Heart left ventricle (tissue), 16 donors: ENCODE measurements at regions of chr12 and their contacts with region 1.

Region 1: DNA sequence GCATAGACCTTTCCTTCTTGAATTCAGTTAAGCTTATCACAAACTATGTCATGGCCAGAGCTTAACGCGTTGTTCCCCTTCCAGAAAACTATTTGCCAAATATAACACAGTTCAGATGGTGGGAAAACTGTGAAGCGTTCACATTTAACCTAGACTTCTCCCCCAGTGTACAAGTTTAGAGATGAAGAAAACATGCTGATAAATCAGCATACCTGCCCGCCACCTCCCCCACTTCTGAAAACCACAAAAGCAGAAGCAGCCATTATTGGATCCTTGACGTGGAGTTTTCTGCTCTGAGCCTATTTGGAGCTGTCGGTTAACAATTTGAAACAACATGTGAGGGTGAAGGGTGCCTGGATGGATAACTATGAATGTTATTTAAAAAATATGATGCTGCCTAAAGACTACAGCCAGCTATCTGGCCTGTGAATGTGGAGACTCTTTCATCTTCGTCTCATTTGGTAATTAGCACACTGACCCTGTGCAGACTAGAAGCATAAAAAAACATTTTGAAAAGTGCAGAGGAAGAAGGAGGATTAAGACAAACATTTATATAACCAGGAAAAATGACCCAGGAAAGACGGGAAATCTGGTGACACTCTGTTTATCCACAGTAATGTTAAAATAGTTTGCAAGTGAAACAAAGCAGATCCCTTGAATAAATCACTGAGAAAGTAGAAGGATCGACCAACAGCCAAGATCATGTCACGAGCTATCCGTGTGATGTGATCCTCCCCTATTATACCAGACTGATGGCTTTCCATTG is 408.2 kb downstream of the AEBP2 start:
- DNase-seq: peak in 4 of 5 donors; percentile 38 to 57 (median 44)
- ATAC-seq: peak; percentile 87 to 89 (median 89)
- H3K4me3 ChIP-seq: peak overlapping the region in 7 of 12 donors; percentile 1 to 27 (median 12)
- H3K27ac ChIP-seq: peak overlapping the region; percentile 76 to 96 (median 86)
- H3K4me1 ChIP-seq: peaks cover 0 to 22% (median 13%) of the 10 kb centered on the region in 12 donors
- H3K27me3 ChIP-seq: no peaks in the 10 kb centered on the region
- CTCF ChIP-seq: no peak
- POLR2A ChIP-seq: no peak

Region 2: GRCh38 chr12:19885092-19885812 is 37.8 kb after region 1 on chr12:
- intact Hi-C with region 1: loop called in 1 of 10 experiments (anchors 5 kb)
- DNase-seq: no peak
- ATAC-seq: peak in 3 of 4 donors; percentile 43 to 66 (median 50)
- H3K4me3 ChIP-seq: no peak overlapping the region
- H3K27ac ChIP-seq: peak overlapping the region in 8 of 12 donors; percentile 0 to 69 (median 40)
- H3K4me1 ChIP-seq: peaks cover 0 to 45% (median 15%) of the 10 kb centered on the region in 12 donors
- H3K27me3 ChIP-seq: no peaks in the 10 kb centered on the region
- CTCF ChIP-seq: no peak
- POLR2A ChIP-seq: no peak

Region 3: DNA sequence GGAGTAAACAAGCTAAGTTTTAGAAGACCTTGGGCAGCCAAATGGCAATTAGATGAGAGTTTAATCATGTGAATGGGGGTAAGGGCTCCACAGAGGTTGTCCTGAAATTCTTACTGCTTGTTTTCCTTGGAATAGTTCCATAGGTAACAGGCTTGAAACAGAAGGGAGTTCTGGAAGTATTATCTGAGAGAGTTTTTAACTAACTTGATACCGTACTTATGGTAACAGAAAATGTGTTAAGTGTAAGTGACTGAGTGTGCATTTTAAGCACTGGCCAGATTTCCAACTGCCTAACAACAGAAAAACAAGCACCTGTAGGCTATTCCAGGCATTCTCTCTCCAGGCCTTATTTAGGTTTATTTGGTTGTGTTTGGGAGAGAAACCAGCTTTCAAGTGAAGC is 106.3 kb after region 1 on chr12:
- intact Hi-C with region 1: loop called in 1 of 10 experiments (anchors 5 kb)
- DNase-seq: no peak
- ATAC-seq: peak; percentile 54 to 68 (median 58)
- H3K4me3 ChIP-seq: no peak overlapping the region
- H3K27ac ChIP-seq: peak overlapping the region; percentile 46 to 82 (median 70)
- H3K4me1 ChIP-seq: peaks cover 0 to 21% (median 0%) of the 10 kb centered on the region in 12 donors
- H3K27me3 ChIP-seq: no peaks in the 10 kb centered on the region
- CTCF ChIP-seq: no peak
- POLR2A ChIP-seq: no peak